Panc1 (cell line): ENCODE measurements at regions of chr7 and their contacts with region 1.

Region 1: DNA sequence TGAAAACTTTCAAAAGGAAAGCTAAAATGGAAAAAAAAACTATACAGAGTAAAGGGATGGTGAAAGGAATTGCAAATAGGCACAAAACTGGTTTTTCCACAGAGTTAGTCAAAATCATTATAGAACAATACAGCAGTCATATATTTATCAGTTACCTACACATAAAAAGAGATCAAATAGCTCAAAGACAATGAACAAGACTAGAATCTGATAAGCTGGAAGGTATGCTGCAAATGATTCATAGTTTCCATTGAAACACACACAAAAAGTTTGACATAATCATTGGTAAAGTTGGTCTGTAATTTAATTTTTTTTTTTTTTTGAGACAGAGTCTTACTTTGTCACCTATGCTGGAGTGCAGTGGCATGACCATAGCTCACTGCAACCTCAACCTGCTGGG is 92.4 kb upstream of the SGCE start:
- DNase-seq: no peak
- ATAC-seq: no peak
- H3K4me3 ChIP-seq: no peak overlapping the region
- H3K27ac ChIP-seq: no peak overlapping the region
- H3K4me1 ChIP-seq: no peaks in the 10 kb centered on the region
- H3K27me3 ChIP-seq: no peaks in the 10 kb centered on the region
- CTCF ChIP-seq: no peak

Region 2: DNA sequence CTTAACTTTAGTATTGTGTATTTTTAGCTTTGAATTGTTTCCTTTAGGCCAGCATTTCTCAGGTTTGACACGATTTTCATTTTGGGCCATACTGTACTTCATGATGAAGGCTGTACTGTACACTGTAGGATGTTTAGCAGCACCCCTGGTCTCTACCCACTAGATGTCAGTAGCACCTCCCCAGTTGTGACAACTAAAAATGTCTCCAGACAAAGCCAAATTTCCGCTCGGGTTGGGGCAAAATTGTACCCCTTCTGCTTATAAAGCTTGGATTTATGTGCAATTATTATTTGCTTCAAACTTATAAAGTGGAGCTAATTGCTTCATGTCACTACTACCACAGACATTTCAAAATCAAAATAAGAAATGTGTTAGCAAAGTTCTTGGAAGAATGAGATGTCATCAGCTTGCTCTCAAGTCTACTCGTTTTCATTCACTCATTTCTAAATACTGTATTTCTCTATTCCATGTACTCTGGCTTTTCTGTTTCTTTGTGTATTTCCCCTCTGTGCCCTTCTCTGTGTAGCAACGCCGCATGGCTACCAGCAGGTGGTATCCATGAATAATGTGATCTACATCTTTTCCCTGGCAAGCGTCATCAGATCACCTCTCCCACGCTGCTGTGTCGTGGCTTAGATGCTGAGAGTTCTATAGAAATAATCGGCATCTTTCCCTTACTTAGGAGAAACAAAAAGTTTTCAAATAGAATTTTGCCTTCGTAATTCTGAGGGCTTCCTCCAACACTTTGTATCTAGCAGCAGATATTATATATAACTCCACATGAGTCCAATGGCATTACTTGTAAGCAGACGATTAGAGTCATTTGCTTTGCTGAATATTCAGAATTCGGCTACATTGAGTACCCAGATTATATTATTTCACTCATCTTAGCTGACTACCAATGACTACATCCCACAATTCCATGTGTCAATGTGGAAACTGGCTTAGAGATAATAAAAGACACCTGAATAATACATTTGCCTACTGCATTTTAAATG is 1126.0 kb before region 1 on chr7:
- CTCF ChIA-PET with region 1: no interaction called
- POLR2A ChIA-PET with region 1: no interaction called
- in situ Hi-C with region 1: no loop called
- intact Hi-C with region 1: no loop called
- DNase-seq: no peak
- ATAC-seq: peak; percentile 92
- H3K4me3 ChIP-seq: no peak overlapping the region
- H3K27ac ChIP-seq: no peak overlapping the region
- H3K4me1 ChIP-seq: no peaks in the 10 kb centered on the region
- H3K27me3 ChIP-seq: no peaks in the 10 kb centered on the region; the same call in 1 of the 2 replicates
- CTCF ChIP-seq: peak; percentile 66

Region 3: DNA sequence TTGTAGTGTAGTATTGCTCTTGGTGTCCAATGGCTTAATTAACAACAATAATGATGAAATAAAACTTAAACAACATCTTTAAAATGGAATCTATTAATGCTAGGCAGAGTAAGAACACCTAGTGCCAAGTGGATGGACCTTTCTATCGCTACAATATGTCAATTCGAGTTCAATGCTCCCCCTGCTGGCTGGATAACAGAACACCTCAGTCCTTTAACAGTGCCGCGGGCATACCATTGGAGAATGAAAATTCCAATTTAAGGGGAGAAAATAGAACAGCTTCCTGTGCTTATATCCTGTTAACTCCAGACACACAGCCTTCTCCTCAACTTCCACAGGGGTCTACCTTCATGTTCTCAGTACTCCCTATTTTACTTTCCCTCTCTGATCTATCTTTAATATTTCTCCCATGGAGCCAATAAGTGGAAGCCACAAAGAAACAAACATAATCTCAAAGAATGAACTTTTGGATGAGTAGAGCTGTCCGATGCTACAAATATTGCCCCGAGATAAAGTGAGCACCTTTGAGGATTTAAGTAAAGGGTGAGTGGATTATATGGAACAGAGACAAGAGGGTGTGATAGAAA is 312.3 kb before region 1 on chr7:
- CTCF ChIA-PET with region 1: no interaction called
- POLR2A ChIA-PET with region 1: no interaction called
- in situ Hi-C with region 1: no loop called
- intact Hi-C with region 1: no loop called
- DNase-seq: peak; percentile 39
- ATAC-seq: peak; percentile 93
- H3K4me3 ChIP-seq: no peak overlapping the region
- H3K27ac ChIP-seq: no peak overlapping the region
- H3K4me1 ChIP-seq: no peaks in the 10 kb centered on the region
- H3K27me3 ChIP-seq: no peaks in the 10 kb centered on the region; the same call in 1 of the 2 replicates
- CTCF ChIP-seq: peak; percentile 83

Region 4: GRCh38 chr7:94547126-94547525 is 201.2 kb before region 1 on chr7:
- CTCF ChIA-PET with region 1: no interaction called
- POLR2A ChIA-PET with region 1: no interaction called
- in situ Hi-C with region 1: no loop called
- intact Hi-C with region 1: no loop called
- DNase-seq: no peak
- ATAC-seq: no peak
- H3K4me3 ChIP-seq: no peak overlapping the region
- H3K27ac ChIP-seq: no peak overlapping the region
- H3K4me1 ChIP-seq: no peaks in the 10 kb centered on the region
- H3K27me3 ChIP-seq: no peaks in the 10 kb centered on the region
- CTCF ChIP-seq: no peak

Region 5: DNA sequence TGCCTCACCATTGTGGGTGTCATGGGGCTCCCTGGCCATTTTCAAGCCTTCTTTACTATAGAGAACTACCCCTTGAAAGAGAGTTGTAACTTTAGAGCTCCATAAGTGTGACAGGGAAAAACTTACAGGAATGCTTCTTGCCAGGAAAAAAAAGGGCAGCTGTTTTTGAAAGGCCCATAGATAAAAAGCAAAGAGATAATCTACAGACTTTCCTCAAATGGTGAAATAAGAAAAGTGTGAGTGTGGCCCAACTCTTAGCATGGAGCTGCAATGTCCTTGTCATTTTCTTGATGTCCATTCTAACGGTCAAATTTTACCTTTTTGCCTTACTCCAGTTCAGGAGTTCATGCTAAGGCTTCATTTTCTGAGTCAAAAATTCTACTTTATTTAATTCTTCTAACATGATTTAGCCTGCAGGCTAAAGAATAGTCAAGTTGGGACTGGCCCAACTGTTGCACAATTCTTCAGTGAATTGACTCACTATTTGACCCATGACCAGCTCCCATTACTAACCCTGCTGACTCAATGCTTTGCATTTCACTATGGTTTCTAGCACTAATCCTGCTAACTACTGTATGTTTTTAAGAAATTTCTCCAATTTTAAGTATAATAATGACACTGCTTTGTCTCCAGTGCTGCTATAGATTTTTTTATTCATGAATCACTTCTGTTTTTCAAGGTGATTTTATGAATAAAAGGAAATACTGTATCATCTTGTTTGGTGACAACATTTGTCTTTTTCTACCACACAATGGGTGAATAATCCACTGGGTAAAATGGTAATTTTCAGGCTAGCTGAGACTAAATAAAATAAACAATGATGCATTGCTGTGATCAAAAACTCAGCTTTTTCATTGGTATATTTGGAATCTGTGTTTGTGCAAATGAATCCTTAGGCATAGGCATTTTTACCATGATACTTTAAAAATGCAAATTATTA is 51.1 kb before region 1 on chr7:
- CTCF ChIA-PET with region 1: no interaction called
- POLR2A ChIA-PET with region 1: no interaction called
- in situ Hi-C with region 1: no loop called
- intact Hi-C with region 1: no loop called
- DNase-seq: peak; percentile 82
- ATAC-seq: no peak
- H3K4me3 ChIP-seq: no peak overlapping the region
- H3K27ac ChIP-seq: no peak overlapping the region
- H3K4me1 ChIP-seq: no peaks in the 10 kb centered on the region; the same call in 1 of the 2 replicates
- H3K27me3 ChIP-seq: no peaks in the 10 kb centered on the region
- CTCF ChIP-seq: no peak

Region 6: GRCh38 chr7:94874047-94874785 is 125.8 kb after region 1 on chr7:
- CTCF ChIA-PET with region 1: no interaction called
- POLR2A ChIA-PET with region 1: interaction called, 10 read pairs
- in situ Hi-C with region 1: no loop called
- intact Hi-C with region 1: no loop called
- DNase-seq: no peak
- ATAC-seq: no peak
- H3K4me3 ChIP-seq: no peak overlapping the region
- H3K27ac ChIP-seq: no peak overlapping the region
- H3K4me1 ChIP-seq: no peaks in the 10 kb centered on the region
- H3K27me3 ChIP-seq: no peaks in the 10 kb centered on the region
- CTCF ChIP-seq: no peak